ENCODE measurements at regions of chr19 and their contacts with region 1.

Region 1: DNA sequence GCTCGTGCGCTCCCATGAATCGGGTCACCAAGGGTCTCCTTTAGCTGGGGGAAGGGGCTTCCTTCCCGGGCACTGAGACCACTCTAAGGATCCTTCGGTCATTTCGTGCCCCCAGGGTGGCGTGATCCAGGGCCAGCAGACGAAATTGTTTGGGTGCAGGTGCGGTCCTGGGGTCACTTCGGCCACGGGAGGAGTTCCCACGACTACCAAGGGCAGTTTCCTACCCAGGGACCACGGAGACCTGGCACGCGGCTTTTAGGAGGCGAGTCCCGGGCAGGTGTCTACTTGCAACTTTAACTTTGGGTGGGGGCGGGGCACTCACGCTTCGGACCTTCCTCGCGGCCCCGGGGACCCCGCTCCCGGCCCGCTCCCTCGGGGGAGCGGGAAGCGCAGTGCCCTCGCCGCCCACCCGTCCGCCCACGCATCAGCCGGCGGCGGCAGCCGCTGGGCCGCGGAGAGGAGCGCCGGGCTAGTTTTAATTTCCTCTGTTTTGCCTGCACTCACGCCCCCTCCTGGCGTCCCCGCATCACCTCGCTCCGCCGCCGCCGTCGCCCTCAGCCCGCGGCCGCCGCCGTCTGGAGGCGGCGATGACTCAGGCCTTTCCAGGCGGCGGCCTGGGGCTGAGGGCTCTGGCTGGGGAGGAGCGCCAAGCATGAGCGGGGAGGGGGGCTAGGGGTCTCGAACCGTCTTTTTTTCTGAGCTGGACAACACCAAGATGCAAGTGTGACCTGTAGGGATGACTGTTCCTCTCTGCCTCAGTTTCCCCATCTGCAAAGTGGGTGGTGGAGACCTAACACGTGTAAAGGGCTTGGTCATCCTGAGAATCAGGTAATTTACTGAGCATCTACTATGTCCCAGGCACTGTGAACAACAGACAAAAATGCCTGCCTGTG is 21.8 kb downstream of the OLFM2 start:
- DNase-seq: peak; percentile 92
- H3K4me3 Mint-ChIP-seq: peak overlapping the region; percentile 62
- H3K27ac Mint-ChIP-seq: no peak overlapping the region
- H3K4me1 Mint-ChIP-seq: peaks cover 5% of the 10 kb centered on the region
- H3K27me3 Mint-ChIP-seq: peaks cover 20% of the 10 kb centered on the region

Region 2: DNA sequence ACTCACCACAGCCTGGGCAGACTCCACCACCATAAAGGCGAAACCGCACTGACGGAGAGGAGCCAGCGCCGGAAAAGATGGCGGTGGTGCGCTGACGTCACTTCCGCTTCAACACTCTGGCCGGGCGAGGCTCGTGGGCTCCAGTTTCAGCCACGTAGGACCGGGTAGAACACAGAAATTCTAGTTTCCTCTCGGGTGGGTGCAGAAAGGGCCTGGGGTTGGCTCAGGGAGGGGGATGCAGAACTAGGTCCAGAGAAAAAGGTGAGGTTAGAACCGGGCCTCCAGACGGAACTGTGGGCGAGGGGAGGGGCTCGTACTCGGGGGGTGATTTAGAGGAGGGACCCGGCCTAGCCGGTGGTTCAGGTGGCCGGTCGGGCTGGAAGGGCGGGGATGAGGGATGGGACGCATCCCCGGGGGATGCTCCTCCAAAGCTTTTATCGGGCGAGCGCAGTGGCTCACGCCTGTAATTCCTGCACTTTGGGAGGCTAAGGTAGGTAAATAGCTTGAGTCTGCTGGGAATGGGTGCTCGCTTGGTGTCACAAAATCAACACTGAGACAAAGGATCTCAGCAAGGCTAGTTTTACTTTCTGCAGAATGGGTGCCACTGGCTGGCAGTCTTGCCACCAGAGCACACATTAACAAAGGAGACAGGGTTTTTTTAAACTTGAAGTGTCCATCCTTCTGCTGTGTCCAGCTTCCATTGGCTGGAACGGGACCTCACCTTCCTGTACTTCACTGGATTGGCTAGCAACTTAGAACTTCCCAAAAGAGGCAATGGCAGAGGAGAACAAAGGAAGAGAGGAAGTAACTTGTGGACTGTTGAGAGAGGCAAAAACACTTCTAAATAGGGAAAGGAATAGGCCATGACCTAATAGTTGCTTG is 293.2 kb before region 1 on chr19 and contains the start of gene ZNF561:
- CTCF ChIA-PET with region 1: no interaction called
- POLR2A ChIA-PET with region 1: no interaction called
- intact Hi-C with region 1: loop called (anchors 10 kb)
- DNase-seq: peak; percentile 91
- H3K4me3 Mint-ChIP-seq: peak within 1 kb of the TSS; percentile 92
- H3K27ac Mint-ChIP-seq: peak within 1 kb of the TSS; percentile 99
- H3K4me1 Mint-ChIP-seq: peaks cover 22% of the 10 kb centered on the region
- H3K27me3 Mint-ChIP-seq: no peaks in the 10 kb centered on the region
- total RNA-seq, gene ZNF561: 24.7 to 25.5 TPM

Region 3: DNA sequence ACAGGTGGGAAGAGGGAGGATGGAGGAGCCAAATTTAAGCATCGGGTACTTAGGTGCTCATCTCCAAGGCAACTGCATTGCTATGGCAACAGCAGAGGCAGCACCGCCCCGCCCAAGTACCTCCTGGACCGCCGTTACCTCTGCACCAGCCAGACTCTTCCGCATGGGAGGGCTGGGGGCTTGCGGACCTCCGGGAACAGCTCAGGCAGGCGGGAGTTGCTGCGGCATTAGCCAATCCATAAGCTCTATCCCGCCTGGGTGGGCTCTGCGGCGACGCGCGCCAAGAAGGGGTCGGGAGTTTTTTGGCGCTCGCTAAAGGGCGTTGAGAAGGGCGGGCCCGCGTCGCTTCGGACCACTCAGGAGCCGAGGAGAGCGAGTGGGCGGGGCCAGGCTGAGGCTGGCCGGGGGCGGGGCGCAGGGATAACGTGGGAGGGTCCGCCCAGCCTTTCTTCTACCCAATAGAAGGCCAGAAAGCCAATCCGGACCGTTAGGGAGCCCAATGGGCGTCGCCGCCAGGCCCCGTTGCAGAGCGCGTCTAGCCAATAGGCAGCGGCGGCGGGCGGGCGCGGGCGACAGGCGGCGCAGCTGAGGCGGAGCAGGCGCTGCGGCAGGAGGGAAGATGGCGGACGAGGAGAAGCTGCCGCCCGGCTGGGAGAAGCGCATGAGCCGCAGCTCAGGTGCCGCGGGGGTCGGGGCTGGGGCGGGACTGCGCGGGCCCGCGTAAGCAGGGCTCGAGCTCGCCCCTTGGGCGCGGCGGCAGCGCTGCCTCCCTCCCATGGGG is 79.6 kb before region 1 on chr19 and contains the start of gene PIN1:
- CTCF ChIA-PET with region 1: no interaction called
- POLR2A ChIA-PET with region 1: no interaction called
- intact Hi-C with region 1: loop called (anchors 5 kb)
- DNase-seq: peak; percentile 100
- H3K4me3 Mint-ChIP-seq: peak within 1 kb of the TSS; percentile 91
- H3K27ac Mint-ChIP-seq: peak within 1 kb of the TSS; percentile 78
- H3K4me1 Mint-ChIP-seq: peaks cover 23% of the 10 kb centered on the region
- H3K27me3 Mint-ChIP-seq: no peaks in the 10 kb centered on the region
- total RNA-seq, gene PIN1: 85.4 to 86.1 TPM

Region 4: DNA sequence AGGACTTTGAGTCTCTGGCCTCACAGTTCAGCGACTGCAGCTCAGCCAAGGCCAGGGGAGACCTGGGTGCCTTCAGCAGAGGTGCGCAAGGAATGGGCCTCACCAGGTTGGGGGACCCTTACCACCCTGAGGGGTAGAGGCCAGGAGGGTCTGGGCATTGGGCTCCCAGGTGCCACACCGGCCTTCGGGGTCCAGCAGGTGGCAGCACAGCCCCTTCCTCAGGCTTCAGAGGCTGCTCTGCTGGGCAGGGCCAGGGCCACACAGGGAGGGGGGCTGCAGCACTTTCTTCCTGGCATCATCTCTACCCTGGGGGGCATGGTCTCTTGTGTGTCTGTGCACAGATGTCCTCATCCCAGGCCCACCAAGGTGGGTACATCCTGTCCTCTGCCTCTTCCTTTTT is 66.5 kb before region 1 on chr19:
- CTCF ChIA-PET with region 1: no interaction called
- POLR2A ChIA-PET with region 1: no interaction called
- intact Hi-C with region 1: loop called (anchors 1 kb)
- DNase-seq: peak; percentile 56
- H3K4me3 Mint-ChIP-seq: no peak overlapping the region
- H3K27ac Mint-ChIP-seq: no peak overlapping the region
- H3K4me1 Mint-ChIP-seq: peaks cover 5% of the 10 kb centered on the region
- H3K27me3 Mint-ChIP-seq: no peaks in the 10 kb centered on the region

Region 5: GRCh38 chr19:10027158-10027693 is 112.7 kb after region 1 on chr19:
- CTCF ChIA-PET with region 1: interaction called, 10 read pairs
- POLR2A ChIA-PET with region 1: no interaction called
- intact Hi-C with region 1: no loop called
- DNase-seq: no peak
- H3K4me3 Mint-ChIP-seq: no peak overlapping the region
- H3K27ac Mint-ChIP-seq: no peak overlapping the region
- H3K4me1 Mint-ChIP-seq: peaks cover 2% of the 10 kb centered on the region
- H3K27me3 Mint-ChIP-seq: peaks cover 9% of the 10 kb centered on the region

Region 6: DNA sequence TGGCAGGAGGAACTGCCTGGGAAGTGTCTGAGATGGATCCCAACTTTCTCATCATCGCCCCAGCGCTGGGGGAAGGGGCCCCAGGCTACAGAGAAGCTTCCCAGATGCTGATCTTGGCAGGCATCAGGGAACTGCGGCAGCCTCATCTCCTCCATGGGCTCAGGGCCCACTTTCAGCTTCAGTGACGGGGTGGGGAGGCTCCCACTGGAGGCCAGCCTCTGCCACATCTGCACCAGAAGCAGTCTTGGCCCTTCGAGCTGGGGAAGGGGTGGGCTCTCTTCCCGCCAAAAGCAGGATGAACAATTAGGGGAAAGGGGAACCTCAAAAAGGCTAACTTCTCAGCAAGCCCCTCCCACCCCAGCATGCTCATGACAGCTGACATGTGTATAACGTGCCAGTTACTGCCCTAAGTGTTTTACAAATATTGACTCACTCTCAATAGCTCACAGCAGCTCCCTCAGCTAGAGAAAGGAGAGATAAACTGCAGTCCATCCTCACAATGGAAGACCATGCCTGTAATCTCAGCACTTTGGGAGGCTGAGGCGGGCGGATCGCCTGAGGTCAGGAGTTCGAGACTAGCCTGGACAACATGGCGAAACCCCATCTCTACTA is 323.7 kb after region 1 on chr19:
- CTCF ChIA-PET with region 1: no interaction called
- POLR2A ChIA-PET with region 1: no interaction called
- intact Hi-C with region 1: no loop called
- DNase-seq: no peak
- H3K4me3 Mint-ChIP-seq: no peak overlapping the region
- H3K27ac Mint-ChIP-seq: peak overlapping the region; percentile 49
- H3K4me1 Mint-ChIP-seq: peaks cover 17% of the 10 kb centered on the region
- H3K27me3 Mint-ChIP-seq: no peaks in the 10 kb centered on the region